Activated CD8-positive, alpha-beta T cell treated with anti-CD3 and anti-CD28 coated beads for 36 hours (primary cell): ENCODE measurements at regions of chr22 and their contacts with region 1.

Region 1: GRCh38 chr22:30005213-30005857 is 74.9 kb upstream of the HORMAD2 start:
- DNase-seq: peak; percentile 80
- ATAC-seq: peak; percentile 83
- H3K4me3 Mint-ChIP-seq: no peak overlapping the region
- H3K27ac Mint-ChIP-seq: no peak overlapping the region
- H3K4me1 Mint-ChIP-seq: peaks cover 7% of the 10 kb centered on the region
- H3K27me3 Mint-ChIP-seq: no peaks in the 10 kb centered on the region
- CTCF ChIP-seq: peak; percentile 97

Region 2: GRCh38 chr22:29701155-29701999 is 304.0 kb before region 1 on chr22:
- CTCF ChIA-PET with region 1: interaction called, 14 read pairs
- POLR2A ChIA-PET with region 1: no interaction called
- intact Hi-C with region 1: no loop called
- DNase-seq: peak; percentile 46
- ATAC-seq: peak; percentile 78
- H3K4me3 Mint-ChIP-seq: no peak overlapping the region
- H3K27ac Mint-ChIP-seq: no peak overlapping the region
- H3K4me1 Mint-ChIP-seq: peaks cover 4% of the 10 kb centered on the region
- H3K27me3 Mint-ChIP-seq: peaks cover 2% of the 10 kb centered on the region
- CTCF ChIP-seq: no peak

Region 3: DNA sequence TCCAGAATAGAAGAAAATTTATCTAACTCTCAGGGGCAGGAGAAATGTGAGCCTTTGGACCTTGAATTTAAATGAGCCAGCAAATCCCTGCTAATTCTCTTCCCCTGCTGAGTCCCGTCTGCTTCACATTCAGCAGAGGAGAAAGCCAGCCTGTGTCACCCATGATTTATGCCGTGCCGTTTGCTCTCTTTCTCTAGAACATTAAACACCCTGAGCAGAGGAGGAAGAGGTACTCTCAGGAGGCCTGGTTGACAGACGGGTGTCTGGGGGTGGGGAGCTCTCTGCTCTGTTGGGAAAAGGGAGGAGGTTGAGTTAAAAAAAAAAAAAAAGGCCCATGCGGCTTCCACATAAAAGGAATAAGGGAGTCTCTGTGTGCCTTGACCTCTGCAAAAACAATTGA is 133.7 kb before region 1 on chr22:
- CTCF ChIA-PET with region 1: interaction called, 13 read pairs
- POLR2A ChIA-PET with region 1: no interaction called
- intact Hi-C with region 1: loop called (anchors 10 kb)
- DNase-seq: no peak
- ATAC-seq: no peak
- H3K4me3 Mint-ChIP-seq: no peak overlapping the region
- H3K27ac Mint-ChIP-seq: no peak overlapping the region
- H3K4me1 Mint-ChIP-seq: peaks cover 6% of the 10 kb centered on the region
- H3K27me3 Mint-ChIP-seq: no peaks in the 10 kb centered on the region
- CTCF ChIP-seq: no peak

Region 4: GRCh38 chr22:30015846-30016245 is 10.5 kb after region 1 on chr22:
- CTCF ChIA-PET with region 1: interaction called, 43 read pairs
- POLR2A ChIA-PET with region 1: interaction called, 3 read pairs
- intact Hi-C with region 1: no loop called
- DNase-seq: no peak
- ATAC-seq: no peak
- H3K4me3 Mint-ChIP-seq: no peak overlapping the region
- H3K27ac Mint-ChIP-seq: no peak overlapping the region
- H3K4me1 Mint-ChIP-seq: no peaks in the 10 kb centered on the region
- H3K27me3 Mint-ChIP-seq: no peaks in the 10 kb centered on the region
- CTCF ChIP-seq: no peak

Region 5: DNA sequence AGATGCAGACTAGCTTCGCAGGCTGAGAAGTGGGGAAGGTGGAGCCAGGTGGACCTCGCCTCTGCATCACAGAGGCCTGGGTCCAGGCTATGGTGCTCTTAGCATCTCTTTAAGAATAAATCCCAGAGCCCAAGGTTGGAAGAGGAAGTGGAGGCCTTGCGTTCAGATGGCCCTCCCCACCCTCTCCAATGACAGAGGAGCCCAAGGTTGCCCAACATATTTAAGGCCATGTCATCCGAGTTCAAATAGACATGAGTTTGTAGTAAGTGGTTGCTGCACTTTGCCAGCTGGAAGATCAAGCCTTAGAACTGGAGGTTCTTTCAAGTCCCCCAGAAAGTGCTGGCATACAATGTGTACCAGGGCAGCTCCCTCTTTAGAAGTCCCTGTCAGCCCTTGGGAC is 27.8 kb after region 1 on chr22:
- CTCF ChIA-PET with region 1: interaction called, 15 read pairs
- POLR2A ChIA-PET with region 1: no interaction called
- intact Hi-C with region 1: no loop called
- DNase-seq: no peak
- ATAC-seq: no peak
- H3K4me3 Mint-ChIP-seq: no peak overlapping the region
- H3K27ac Mint-ChIP-seq: no peak overlapping the region
- H3K4me1 Mint-ChIP-seq: no peaks in the 10 kb centered on the region
- H3K27me3 Mint-ChIP-seq: no peaks in the 10 kb centered on the region
- CTCF ChIP-seq: no peak